ENCODE measurements at regions of chr1 and their contacts with region 1.

Region 1: DNA sequence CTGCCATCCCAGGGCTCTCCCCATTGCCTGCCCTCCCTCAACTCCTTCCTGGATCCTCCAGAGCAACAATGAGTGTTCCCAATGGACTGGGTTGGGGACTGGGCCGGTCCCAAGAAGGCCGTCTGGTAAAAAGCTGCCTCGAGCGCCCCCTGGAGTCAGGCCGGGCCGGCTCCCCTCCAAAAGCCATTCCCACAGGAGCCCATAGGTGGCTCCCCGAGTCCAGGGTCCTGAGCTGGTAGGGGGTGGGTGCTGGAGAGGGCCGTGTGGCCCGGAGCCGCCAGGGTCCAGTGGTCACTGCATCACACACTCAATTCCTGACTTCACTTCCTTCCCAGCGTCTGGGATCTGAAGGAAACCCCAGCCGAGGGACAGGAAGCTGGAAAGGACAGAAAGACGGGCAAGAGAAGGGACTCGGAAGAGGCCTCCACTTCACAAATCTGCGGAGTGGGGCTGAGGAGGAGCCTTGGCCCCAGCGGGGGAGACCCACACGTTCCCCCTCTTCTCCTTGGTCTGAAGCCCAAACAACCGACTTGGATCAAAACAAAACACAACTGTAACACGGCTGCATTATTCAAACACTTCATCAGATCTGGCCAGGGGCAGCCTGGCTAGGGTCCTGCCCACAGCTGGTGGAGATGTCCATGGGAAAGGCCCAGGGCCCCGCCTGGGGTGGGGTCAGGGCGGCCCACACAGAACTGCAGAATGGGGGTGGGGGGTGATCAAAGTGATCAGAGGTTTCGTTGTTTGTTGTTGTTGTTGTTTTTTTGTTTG is 10.9 kb upstream of the ALDH4A1 start:
- DNase-seq: peak; percentile 75
- ATAC-seq: peak; percentile 89
- H3K4me3 Mint-ChIP-seq: no peak overlapping the region
- H3K27ac Mint-ChIP-seq: no peak overlapping the region
- H3K4me1 Mint-ChIP-seq: peaks cover 4% of the 10 kb centered on the region
- H3K27me3 Mint-ChIP-seq: no peaks in the 10 kb centered on the region

Region 2: GRCh38 chr1:18751425-18751824 is 161.8 kb before region 1 on chr1:
- CTCF ChIA-PET with region 1: no interaction called
- DNase-seq: no peak
- ATAC-seq: no peak
- H3K4me3 Mint-ChIP-seq: no peak overlapping the region
- H3K27ac Mint-ChIP-seq: no peak overlapping the region
- H3K4me1 Mint-ChIP-seq: no peaks in the 10 kb centered on the region
- H3K27me3 Mint-ChIP-seq: peaks cover 18% of the 10 kb centered on the region

Region 3: DNA sequence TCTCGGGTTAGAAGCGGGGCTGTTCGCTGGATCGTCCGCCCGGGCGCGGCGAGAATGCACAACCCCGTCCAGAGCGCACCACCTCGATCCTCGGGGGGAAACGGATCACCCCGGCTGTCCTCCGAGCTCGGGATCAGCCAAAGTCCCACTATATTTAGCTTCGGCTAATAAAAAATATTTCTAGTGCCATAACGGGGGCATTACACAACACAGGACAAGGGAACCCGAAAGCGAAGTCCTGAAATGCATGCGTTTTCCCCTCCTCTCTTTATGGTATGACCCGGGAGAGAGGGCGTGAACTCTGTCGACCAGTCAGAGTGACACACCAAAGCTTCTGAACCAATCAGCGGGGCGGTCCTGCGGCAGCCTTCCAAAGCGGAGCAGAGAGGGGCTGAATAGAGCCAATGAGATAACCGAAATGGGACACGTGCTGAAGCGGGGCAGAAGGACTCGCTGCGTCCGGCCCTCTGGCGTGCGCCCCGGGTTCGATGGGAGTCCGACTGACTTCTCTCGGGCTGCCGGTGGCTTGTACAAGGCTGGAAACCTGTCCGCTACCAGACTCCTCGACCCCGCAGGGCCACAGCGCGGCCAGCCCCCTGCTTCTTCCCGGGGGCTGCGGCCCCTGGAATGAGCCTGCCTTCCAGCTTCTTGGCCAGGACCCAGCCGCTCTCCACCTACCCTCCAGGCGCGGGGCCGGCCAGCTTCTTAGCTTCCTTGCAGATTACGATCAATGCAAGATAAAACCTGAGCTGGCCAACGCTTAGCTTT is 10.5 kb before region 1 on chr1 and contains the start of gene ALDH4A1:
- CTCF ChIA-PET with region 1: interaction called, 55 read pairs
- DNase-seq: peak; percentile 98
- ATAC-seq: peak; percentile 99
- H3K4me3 Mint-ChIP-seq: peak within 1 kb of the TSS; percentile 92
- H3K27ac Mint-ChIP-seq: peak within 1 kb of the TSS; percentile 97
- H3K4me1 Mint-ChIP-seq: peaks cover 19% of the 10 kb centered on the region
- H3K27me3 Mint-ChIP-seq: no peaks in the 10 kb centered on the region
- total RNA-seq, gene ALDH4A1: 4.5 to 5.8 TPM

Region 4: GRCh38 chr1:18938008-18938706 is 24.9 kb after region 1 on chr1:
- CTCF ChIA-PET with region 1: interaction called, 10 read pairs
- DNase-seq: no peak
- ATAC-seq: no peak
- H3K4me3 Mint-ChIP-seq: no peak overlapping the region
- H3K27ac Mint-ChIP-seq: no peak overlapping the region
- H3K4me1 Mint-ChIP-seq: peaks cover 16% of the 10 kb centered on the region
- H3K27me3 Mint-ChIP-seq: no peaks in the 10 kb centered on the region

Region 5: GRCh38 chr1:18956369-18957135 is 43.3 kb after region 1 on chr1 and contains the start of gene IFFO2:
- CTCF ChIA-PET with region 1: interaction called, 36 read pairs
- DNase-seq: peak; percentile 97
- ATAC-seq: peak; percentile 81
- H3K4me3 Mint-ChIP-seq: peak within 1 kb of the TSS; percentile 78
- H3K27ac Mint-ChIP-seq: peak within 1 kb of the TSS; percentile 57
- H3K4me1 Mint-ChIP-seq: peaks cover 50% of the 10 kb centered on the region
- H3K27me3 Mint-ChIP-seq: peaks cover 43% of the 10 kb centered on the region
- total RNA-seq, gene IFFO2: 12.5 to 13.7 TPM

Region 6: DNA sequence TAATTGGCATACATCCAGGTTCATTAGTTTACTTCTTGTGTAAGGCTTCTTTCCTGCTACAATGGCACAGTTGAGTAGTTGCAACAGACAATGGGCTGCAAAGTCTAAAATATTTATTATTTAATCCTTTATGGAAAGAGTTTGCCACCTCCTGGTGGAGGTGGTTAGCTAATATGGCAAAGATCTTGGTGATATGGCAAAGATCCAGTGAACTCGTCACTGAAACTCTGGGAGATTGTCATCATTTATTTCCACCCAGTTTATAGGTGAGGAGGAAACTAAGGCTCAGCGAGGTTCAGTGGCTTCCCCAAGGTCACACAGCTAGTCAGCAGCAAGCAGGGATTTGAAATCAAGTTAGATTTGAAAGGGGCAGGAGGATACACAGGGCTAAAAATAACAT is 59.3 kb after region 1 on chr1:
- CTCF ChIA-PET with region 1: interaction called, 24 read pairs
- DNase-seq: no peak
- ATAC-seq: peak; percentile 16
- H3K4me3 Mint-ChIP-seq: no peak overlapping the region
- H3K27ac Mint-ChIP-seq: no peak overlapping the region
- H3K4me1 Mint-ChIP-seq: no peaks in the 10 kb centered on the region
- H3K27me3 Mint-ChIP-seq: peaks cover 18% of the 10 kb centered on the region

Region 7: GRCh38 chr1:19096036-19096833 is 183.0 kb after region 1 on chr1:
- CTCF ChIA-PET with region 1: interaction called, 19 read pairs
- DNase-seq: no peak
- ATAC-seq: peak; percentile 33
- H3K4me3 Mint-ChIP-seq: no peak overlapping the region
- H3K27ac Mint-ChIP-seq: no peak overlapping the region
- H3K4me1 Mint-ChIP-seq: no peaks in the 10 kb centered on the region
- H3K27me3 Mint-ChIP-seq: no peaks in the 10 kb centered on the region